B cell (primary cell): ENCODE measurements at regions of chr10 and their contacts with region 1.

Region 1: DNA sequence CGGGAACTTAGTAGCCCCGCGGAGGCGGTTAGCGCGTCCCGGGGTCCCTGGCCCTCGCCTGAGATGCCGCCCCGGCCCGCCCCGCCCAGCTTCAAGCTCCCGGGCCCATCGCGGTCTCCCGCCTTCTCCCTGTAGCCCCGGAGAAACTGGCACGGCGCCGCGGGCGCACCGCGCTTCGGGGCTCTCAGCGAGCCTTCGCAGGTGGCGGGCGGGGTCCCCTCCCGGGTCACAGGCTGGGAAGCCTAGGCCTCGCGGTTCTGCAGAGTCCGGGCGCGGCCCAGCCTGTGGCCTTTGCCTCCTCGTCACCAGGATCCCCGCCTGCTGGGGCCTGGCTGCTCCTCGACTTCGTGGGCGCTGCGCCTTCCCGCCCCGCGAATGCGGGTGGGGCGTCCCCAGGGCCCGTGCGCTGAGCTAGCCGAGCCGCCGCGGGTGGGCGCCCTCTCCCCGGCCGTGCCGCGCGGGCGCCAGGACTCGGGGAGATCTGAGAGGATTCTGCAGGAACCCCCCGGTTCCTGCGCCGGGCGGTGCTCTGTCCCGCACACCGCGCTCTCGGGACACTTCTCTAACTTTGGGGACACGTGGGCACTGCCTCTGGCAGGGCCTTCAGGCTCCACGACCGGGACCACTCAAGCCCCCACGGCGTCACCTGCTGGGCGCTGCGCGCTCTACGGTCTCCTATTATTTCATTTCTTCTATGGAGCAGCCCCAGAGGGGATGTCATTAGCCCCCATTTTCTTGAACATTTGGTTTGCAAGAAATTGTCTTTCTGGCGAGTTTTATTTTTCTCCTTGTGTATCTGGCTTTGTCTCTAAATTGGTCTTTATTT is 682 bp upstream of the RGS10 start:
- DNase-seq: peak; percentile 81
- ATAC-seq: peak; percentile 46
- H3K4me3 ChIP-seq: peak overlapping the region in 4 of 5 experiments; percentile 58 to 78 (median 72)
- H3K4me3 Mint-ChIP-seq: peak overlapping the region; percentile 95
- H3K27ac ChIP-seq: no peak overlapping the region
- H3K27ac Mint-ChIP-seq: peak overlapping the region; percentile 85
- H3K4me1 ChIP-seq: peaks cover 11 to 22% of the 10 kb centered on the region in 2 donors
- H3K4me1 Mint-ChIP-seq: peaks cover 29% of the 10 kb centered on the region
- H3K27me3 ChIP-seq: peaks cover 0 to 3% (median 0%) of the 10 kb centered on the region in 4 experiments
- H3K27me3 Mint-ChIP-seq: peaks cover 8% of the 10 kb centered on the region
- CTCF ChIP-seq: peak; percentile 71

Region 2: DNA sequence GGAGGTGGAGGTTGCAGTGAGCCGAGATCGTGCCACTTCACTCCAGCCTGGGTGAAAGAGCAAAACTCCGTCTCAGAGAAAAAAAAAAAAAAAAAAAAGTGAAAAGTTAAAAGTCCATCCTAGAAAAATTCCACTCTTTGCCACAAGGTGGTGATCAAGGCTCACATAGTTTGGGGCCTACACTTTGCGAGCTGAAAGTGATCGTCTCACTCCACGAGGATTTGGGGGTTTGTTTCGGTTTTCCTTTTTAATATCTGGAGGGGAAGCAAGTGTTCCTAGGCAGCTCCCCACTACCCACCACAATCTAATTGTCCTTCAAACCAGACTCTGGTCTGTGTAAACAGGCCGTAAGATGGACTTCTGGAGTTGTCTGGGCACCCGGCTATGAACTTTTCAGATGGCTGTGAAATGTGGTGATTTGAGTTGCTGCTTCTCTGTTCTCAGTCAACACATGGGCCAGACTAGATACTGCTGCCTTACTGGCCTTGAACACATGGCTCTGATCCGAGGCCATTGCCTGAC is 974.8 kb before region 1 on chr10:
- CTCF ChIA-PET with region 1: no interaction called
- POLR2A ChIA-PET with region 1: no interaction called
- intact Hi-C with region 1: loop called (anchors 5 kb)
- DNase-seq: peak; percentile 71
- ATAC-seq: peak; percentile 53
- H3K4me3 ChIP-seq: no peak overlapping the region
- H3K4me3 Mint-ChIP-seq: no peak overlapping the region
- H3K27ac ChIP-seq: no peak overlapping the region
- H3K27ac Mint-ChIP-seq: no peak overlapping the region
- H3K4me1 ChIP-seq: no peaks in the 10 kb centered on the region
- H3K4me1 Mint-ChIP-seq: no peaks in the 10 kb centered on the region
- H3K27me3 ChIP-seq: no peaks in the 10 kb centered on the region
- H3K27me3 Mint-ChIP-seq: peaks cover 15% of the 10 kb centered on the region
- CTCF ChIP-seq: peak; percentile 81

Region 3: DNA sequence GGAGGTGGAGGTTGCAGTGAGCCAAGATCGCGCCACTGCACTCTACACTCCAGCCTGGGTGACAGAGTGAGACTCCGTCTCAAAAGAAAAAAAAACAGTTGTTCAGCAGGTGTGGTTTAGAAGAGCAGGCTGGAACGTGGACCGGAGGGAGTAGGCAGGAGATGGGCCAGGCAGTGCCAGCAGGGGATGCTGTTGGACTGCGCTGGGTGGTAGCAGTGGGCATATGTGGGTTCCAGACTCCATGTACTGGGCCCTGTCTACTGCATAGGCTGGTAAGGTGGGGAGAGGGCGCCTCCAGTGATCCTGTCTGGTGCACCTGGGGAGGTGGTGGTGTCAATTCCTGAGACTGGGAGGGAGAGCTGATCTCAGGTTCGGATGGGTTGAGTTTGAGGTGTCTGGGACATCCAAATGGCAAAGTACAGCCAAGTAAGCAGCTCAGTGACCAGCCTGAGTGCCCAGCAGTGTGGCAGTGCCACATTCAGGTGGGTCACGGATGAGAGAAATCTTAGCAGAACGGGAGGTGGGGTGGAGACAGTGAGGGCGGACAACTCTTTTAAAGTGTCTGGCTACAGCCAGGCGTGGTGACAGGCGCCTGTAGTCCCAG is 403.6 kb before region 1 on chr10:
- CTCF ChIA-PET with region 1: interaction called, 5 read pairs
- POLR2A ChIA-PET with region 1: no interaction called
- intact Hi-C with region 1: loop called (anchors 2 kb)
- DNase-seq: peak; percentile 46
- ATAC-seq: peak; percentile 68
- H3K4me3 ChIP-seq: no peak overlapping the region
- H3K4me3 Mint-ChIP-seq: no peak overlapping the region
- H3K27ac ChIP-seq: no peak overlapping the region
- H3K27ac Mint-ChIP-seq: peak overlapping the region; percentile 23
- H3K4me1 ChIP-seq: no peaks in the 10 kb centered on the region
- H3K4me1 Mint-ChIP-seq: peaks cover 4% of the 10 kb centered on the region
- H3K27me3 ChIP-seq: no peaks in the 10 kb centered on the region
- H3K27me3 Mint-ChIP-seq: no peaks in the 10 kb centered on the region
- CTCF ChIP-seq: peak; percentile 46

Region 4: DNA sequence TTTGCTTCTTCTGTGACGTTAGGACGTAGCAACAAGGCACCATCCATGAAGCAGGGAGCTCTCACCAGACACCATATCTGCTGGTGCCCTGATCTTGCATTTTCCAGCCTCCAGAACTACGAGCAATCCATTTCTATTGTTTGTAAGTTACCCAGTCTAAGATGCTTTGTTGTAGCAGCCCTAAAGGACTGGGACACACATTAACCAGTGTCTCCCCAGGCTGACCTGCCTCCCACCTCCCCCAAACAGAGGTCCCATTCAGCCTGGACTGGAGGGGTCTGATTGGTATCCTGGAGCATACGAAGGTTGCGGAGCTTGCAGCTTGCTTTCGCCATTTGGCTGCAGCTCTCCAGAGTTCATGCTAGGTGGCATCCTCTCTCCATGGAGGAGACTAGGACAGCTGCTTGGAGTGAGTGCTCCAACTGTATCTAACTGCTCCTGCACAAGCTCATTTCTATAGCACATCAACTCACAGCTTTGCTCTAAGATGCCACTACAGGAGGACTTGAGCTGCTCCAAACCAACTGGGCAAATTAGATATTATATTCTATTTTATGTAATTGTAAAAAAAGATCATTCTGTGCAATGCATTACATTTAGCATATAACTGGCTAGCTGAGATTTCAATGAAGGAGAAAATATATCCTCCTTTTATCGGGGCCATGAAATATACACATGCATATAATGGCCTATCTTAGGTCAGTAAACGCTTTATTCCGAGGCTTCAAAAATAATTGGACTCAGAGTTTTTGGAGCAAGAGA is 343.8 kb before region 1 on chr10:
- CTCF ChIA-PET with region 1: interaction called, 37 read pairs
- POLR2A ChIA-PET with region 1: no interaction called
- intact Hi-C with region 1: loop called (anchors 1 kb)
- DNase-seq: peak; percentile 68
- ATAC-seq: peak; percentile 84
- H3K4me3 ChIP-seq: no peak overlapping the region
- H3K4me3 Mint-ChIP-seq: no peak overlapping the region
- H3K27ac ChIP-seq: no peak overlapping the region
- H3K27ac Mint-ChIP-seq: no peak overlapping the region
- H3K4me1 ChIP-seq: peaks cover 0 to 3% of the 10 kb centered on the region in 2 donors
- H3K4me1 Mint-ChIP-seq: peaks cover 4% of the 10 kb centered on the region
- H3K27me3 ChIP-seq: peaks cover 0 to 8% (median 6%) of the 10 kb centered on the region in 4 experiments
- H3K27me3 Mint-ChIP-seq: peaks cover 9% of the 10 kb centered on the region
- CTCF ChIP-seq: peak; percentile 52

Region 5: GRCh38 chr10:119368991-119369869 is 174.0 kb before region 1 on chr10:
- CTCF ChIA-PET with region 1: no interaction called
- POLR2A ChIA-PET with region 1: no interaction called
- intact Hi-C with region 1: no loop called
- DNase-seq: peak; percentile 75
- ATAC-seq: peak; percentile 76
- H3K4me3 ChIP-seq: peak overlapping the region; percentile 18 to 60 (median 55)
- H3K4me3 Mint-ChIP-seq: peak overlapping the region; percentile 90
- H3K27ac ChIP-seq: peak overlapping the region; percentile 73 to 75
- H3K27ac Mint-ChIP-seq: peak overlapping the region; percentile 97
- H3K4me1 ChIP-seq: peaks cover 59 to 62% of the 10 kb centered on the region in 2 donors
- H3K4me1 Mint-ChIP-seq: peaks cover 66% of the 10 kb centered on the region
- H3K27me3 ChIP-seq: no peaks in the 10 kb centered on the region
- H3K27me3 Mint-ChIP-seq: no peaks in the 10 kb centered on the region
- CTCF ChIP-seq: no peak

Region 6: DNA sequence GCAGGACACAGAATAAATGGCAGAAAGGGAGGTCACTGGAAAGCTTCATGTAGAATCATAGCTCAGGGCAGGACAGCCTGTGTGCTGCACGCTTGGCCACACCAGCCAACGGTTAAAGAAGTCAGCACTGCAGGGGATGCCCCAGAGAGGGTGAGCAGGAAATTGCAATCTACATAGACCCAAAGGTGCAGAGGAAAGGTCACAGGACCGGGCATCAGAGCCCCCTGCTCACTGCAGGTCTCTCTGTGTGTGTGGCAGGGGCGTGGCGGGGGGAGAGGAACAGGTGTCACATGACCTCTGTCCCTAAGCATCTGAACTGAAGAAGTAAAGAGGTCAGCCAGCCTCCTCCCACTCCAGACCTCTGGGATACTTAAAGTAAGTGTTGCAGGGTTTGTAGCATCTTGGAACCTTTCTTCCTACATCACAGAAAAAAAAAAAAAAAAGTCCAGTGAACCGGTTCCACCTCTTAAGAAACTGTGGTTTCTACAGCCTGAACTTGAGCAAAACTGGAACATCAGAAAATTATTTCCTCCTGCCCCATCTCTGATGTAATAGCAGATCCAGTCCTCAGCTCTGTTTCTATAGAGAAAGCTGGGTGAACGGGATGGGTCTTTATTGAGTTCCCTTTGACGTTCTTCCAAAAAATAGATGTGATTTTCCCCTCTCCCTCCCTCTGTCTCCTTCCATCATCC is 64.9 kb before region 1 on chr10:
- CTCF ChIA-PET with region 1: interaction called, 5 read pairs
- POLR2A ChIA-PET with region 1: interaction called, 5 read pairs
- intact Hi-C with region 1: loop called (anchors 5 kb)
- DNase-seq: peak; percentile 77
- ATAC-seq: peak; percentile 95
- H3K4me3 ChIP-seq: peak overlapping the region in 2 of 5 experiments; percentile 5 to 42
- H3K4me3 Mint-ChIP-seq: peak overlapping the region; percentile 87
- H3K27ac ChIP-seq: peak overlapping the region; percentile 47 to 62
- H3K27ac Mint-ChIP-seq: peak overlapping the region; percentile 81
- H3K4me1 ChIP-seq: peaks cover 27 to 31% of the 10 kb centered on the region in 2 donors
- H3K4me1 Mint-ChIP-seq: peaks cover 37% of the 10 kb centered on the region
- H3K27me3 ChIP-seq: no peaks in the 10 kb centered on the region
- H3K27me3 Mint-ChIP-seq: no peaks in the 10 kb centered on the region
- CTCF ChIP-seq: no peak

Region 7: GRCh38 chr10:119517235-119518141 is 25.7 kb before region 1 on chr10:
- CTCF ChIA-PET with region 1: interaction called, 12 read pairs
- POLR2A ChIA-PET with region 1: interaction called, 10 read pairs
- intact Hi-C with region 1: loop called (anchors 1 kb)
- DNase-seq: peak; percentile 89
- ATAC-seq: peak; percentile 73
- H3K4me3 ChIP-seq: peak overlapping the region in 3 of 5 experiments; percentile 25 to 51 (median 33)
- H3K4me3 Mint-ChIP-seq: peak overlapping the region; percentile 64
- H3K27ac ChIP-seq: peak overlapping the region; percentile 67 to 95
- H3K27ac Mint-ChIP-seq: peak overlapping the region; percentile 94
- H3K4me1 ChIP-seq: peaks cover 31 to 38% of the 10 kb centered on the region in 2 donors
- H3K4me1 Mint-ChIP-seq: peaks cover 34% of the 10 kb centered on the region
- H3K27me3 ChIP-seq: no peaks in the 10 kb centered on the region
- H3K27me3 Mint-ChIP-seq: no peaks in the 10 kb centered on the region
- CTCF ChIP-seq: no peak